Activated T-helper 1 cell treated with anti-CD3 and anti-CD28 coated beads, Interleukin-12 subunit alpha, Interleukin-12 subunit beta, Interleukin-2, Interleukin-4 antibody, amounts not matched to agents 30 ng/mL and 10 ng/mL and 1 ng/mL, durations not matched to agents 14 hours and 24 hours and 36 hours (primary cell): ENCODE measurements at regions of chr22 and their contacts with region 1.

Region 1: GRCh38 chr22:41091132-41092022 is 1.0 kb upstream of the EP300 start:
- DNase-seq: peak; percentile 98
- H3K4me3 Mint-ChIP-seq: peak overlapping the region; percentile 100
- H3K27ac Mint-ChIP-seq: peak overlapping the region; percentile 100
- H3K4me1 Mint-ChIP-seq: peaks cover 30% of the 10 kb centered on the region
- H3K27me3 Mint-ChIP-seq: peaks cover 2% of the 10 kb centered on the region

Region 2: GRCh38 chr22:40818747-40819598 is 272.4 kb before region 1 on chr22 and contains the start of gene SLC25A17:
- intact Hi-C with region 1: loop called (anchors 1 kb)
- DNase-seq: peak; percentile 82
- H3K4me3 Mint-ChIP-seq: peak within 1 kb of the TSS; percentile 87
- H3K27ac Mint-ChIP-seq: peak within 1 kb of the TSS; percentile 93
- H3K4me1 Mint-ChIP-seq: peaks cover 33% of the 10 kb centered on the region
- H3K27me3 Mint-ChIP-seq: no peaks in the 10 kb centered on the region
- total RNA-seq, gene SLC25A17: 29.4 and 34.0 TPM in 2 replicates

Region 3: DNA sequence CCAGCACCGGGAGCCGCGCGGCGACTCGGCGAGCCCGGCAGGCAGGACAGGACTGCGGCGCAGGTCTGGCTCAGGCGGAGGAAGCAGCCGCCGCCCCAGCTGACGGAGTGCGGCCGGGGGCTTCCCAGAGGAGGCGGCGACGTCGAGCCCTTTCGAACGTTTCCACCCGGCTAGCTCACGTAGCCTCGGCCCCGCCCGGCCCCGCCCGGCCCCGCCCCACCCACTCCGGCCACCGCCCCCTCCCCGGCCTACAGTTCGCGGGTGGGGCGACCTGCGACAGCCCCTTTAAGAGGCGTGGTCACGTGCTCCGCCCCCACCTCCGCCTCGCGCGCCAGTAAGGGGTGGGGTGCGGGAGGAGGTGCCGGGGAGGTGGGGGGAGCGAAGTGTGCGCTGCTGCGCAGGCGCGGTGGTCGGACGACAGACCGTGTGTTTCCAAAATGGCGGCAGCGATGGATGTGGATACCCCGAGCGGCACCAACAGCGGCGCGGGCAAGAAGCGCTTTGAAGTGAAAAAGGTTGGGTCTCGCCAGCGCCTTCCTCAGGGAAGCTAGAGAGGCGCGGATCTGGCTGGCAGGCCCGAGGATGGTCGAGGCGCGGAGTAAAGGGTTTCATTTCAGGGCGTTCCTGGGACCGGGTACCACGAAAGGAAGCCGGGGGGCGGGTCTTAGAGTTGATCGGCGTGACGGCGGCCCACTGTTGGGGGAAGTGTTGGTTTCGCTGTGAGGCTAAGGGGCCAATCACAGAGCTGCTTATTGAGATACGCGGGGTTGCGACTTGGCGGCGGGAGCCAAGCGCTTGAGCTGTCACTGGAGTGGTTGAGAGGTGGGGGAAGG is 140.2 kb before region 1 on chr22 and contains the start of gene RBX1:
- intact Hi-C with region 1: loop called (anchors 1 kb)
- DNase-seq: peak; percentile 98
- H3K4me3 Mint-ChIP-seq: peak within 1 kb of the TSS; percentile 98
- H3K27ac Mint-ChIP-seq: peak within 1 kb of the TSS; percentile 98
- H3K4me1 Mint-ChIP-seq: peaks cover 33% of the 10 kb centered on the region
- H3K27me3 Mint-ChIP-seq: no peaks in the 10 kb centered on the region
- total RNA-seq, gene RBX1: 90.9 and 94.4 TPM in 2 replicates

Region 4: GRCh38 chr22:41106122-41106968 is 15.0 kb after region 1 on chr22:
- intact Hi-C with region 1: loop called (anchors 1 kb)
- DNase-seq: no peak
- H3K4me3 Mint-ChIP-seq: no peak overlapping the region
- H3K27ac Mint-ChIP-seq: peak overlapping the region; percentile 74
- H3K4me1 Mint-ChIP-seq: peaks cover 40% of the 10 kb centered on the region
- H3K27me3 Mint-ChIP-seq: no peaks in the 10 kb centered on the region

Region 5: DNA sequence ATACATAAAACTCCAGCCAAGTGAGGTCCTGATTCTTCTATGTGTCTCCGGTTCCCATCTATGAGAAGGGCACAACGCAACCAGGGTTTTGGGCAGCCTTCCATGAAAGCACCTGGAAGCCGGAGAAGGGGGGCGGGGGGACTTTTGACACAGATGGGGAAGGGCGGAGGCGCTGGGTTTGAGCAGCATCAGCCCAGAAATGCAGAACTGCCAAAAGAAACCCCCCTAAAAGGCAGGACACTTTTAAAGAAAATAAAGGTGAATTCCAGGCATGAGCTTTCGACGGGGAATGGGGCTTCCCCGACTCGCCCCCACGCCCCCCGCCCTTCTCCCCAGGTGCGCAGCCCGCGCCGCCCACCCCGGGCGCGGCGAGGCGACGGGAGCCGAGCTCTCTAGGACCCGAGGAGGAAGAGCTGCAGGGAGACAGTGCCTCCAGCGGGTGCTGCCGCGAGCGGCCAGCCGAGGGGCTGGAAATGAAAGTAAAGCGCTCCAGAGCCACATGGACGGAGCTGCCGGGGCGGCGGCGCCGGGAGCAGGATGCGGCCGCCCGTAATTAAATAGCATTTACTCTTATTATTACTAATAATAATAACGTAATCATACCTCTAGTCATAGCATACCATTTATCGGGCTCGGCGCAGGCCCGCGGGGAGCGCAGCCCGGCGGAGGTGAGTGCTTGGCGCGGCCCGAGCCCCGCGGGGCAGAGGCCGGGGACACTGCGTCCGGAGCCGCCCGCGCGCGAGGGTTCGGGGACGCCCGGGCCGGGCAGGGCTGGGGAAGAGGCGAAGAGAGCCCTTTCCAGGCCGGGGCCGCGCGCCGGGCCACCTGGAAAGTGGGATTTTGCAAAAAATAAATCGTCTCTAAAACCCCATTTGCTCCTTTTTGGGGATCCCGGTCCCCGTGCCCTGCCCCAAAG is 210.0 kb after region 1 on chr22 and contains the start of gene ZC3H7B:
- intact Hi-C with region 1: loop called (anchors 5 kb)
- DNase-seq: peak; percentile 81
- H3K4me3 Mint-ChIP-seq: peak within 1 kb of the TSS; percentile 87
- H3K27ac Mint-ChIP-seq: peak within 1 kb of the TSS; percentile 82
- H3K4me1 Mint-ChIP-seq: peaks cover 36% of the 10 kb centered on the region
- H3K27me3 Mint-ChIP-seq: no peaks in the 10 kb centered on the region
- total RNA-seq, gene ZC3H7B: 77.1 and 79.0 TPM in 2 replicates